ENCODE measurements at regions of chr4 and their contacts with region 1.

Region 1: GRCh38 chr4:137861682-137862081 is 329.4 kb upstream of the PCDH18 start:
- DNase-seq: no peak
- ATAC-seq: no peak

Region 2: GRCh38 chr4:137124278-137124932 is 737.3 kb before region 1 on chr4:
- intact Hi-C with region 1: loop called (anchors 2 kb)
- DNase-seq: no peak
- ATAC-seq: peak; percentile 91

Region 3: DNA sequence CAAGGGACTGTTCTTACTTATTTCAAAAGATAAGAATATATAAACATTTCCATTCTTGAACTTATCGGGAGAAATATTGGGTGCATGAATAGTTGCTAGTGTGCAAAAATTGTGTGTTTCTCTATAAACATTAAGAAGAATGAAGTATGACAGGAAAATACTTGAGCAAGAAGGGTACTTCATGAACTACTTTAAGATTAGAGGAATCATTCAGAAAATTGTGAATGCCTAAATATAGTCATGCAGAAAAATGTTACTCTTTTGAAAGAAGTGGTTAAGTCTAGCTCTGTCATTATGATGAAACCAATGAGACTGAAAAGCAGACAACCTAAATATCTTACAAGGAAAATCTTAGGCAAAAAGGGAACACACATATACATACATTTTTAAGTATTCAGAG is 121.5 kb before region 1 on chr4:
- intact Hi-C with region 1: no loop called
- DNase-seq: no peak
- ATAC-seq: no peak

Region 4: DNA sequence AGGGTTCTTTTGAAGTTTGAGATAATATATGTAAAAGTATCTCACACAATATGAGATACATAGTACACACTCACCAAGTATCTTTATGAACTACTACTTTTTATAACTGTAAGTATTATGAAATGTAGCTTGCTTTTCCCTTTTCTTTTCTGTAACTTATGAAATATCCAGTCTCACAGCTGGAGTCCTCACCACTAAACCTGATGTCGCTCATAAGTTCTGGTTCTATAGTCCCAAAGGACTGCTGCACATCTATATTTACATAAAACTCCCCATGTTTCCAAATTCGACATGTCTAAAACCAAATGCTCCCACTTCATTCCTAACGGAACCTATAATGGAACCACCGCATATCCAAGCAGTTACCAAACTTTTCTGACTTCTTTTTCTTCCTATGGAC is 566.9 kb after region 1 on chr4:
- intact Hi-C with region 1: no loop called
- DNase-seq: no peak
- ATAC-seq: no peak